ENCODE measurements at regions of chr6 and their contacts with region 1.

Region 1: DNA sequence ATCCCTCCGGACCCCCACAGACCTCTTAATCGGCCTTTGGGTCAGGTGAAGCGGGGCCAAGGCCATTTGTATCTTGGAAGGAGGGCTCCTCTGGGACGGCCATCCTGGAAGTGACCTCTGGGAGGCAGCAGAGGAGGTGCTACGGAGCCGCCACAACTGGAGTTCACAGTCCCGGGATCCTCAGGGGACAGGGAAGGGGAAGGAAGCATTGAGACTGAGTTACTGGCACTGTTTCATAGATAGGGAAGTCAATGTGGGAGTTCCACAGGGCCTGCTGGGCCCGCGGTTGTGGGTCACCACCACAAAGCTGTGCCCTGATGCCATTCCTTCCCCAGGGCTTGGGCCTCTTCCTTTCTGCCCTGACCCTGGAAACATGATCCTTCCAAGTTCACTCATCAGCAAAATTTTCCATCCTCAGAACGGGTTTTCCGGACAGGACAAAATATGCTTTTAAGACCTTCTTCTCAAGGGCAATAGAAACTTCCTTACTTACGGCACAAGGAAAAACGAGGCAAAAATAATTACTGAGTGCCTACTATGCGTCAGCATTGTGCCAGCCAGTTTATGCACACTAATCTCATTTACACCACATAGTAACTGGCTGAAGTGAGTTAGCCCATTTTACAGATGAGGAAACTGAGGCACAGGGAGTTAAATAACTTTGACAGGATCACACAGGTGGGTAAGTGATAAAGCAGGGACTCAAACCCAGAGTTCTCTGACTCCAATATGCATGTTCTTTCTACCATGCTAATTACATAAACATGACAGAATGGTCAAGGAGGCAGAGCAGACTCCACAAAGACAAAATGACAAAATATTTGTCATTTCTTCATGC is 143.8 kb downstream of the UNC5CL start:
- DNase-seq: peak; percentile 56 to 67
- ATAC-seq: peak; percentile 53 to 88 (median 83)
- H3K4me3 ChIP-seq: no peak overlapping the region
- H3K27ac ChIP-seq: peak overlapping the region in 6 of 10 donors; percentile 8 to 92 (median 44)
- H3K4me1 ChIP-seq: peaks cover 0 to 36% (median 18%) of the 10 kb centered on the region in 9 donors
- H3K27me3 ChIP-seq: no peaks in the 10 kb centered on the region
- CTCF ChIP-seq: peak; percentile 24 to 70 (median 58)

Region 2: DNA sequence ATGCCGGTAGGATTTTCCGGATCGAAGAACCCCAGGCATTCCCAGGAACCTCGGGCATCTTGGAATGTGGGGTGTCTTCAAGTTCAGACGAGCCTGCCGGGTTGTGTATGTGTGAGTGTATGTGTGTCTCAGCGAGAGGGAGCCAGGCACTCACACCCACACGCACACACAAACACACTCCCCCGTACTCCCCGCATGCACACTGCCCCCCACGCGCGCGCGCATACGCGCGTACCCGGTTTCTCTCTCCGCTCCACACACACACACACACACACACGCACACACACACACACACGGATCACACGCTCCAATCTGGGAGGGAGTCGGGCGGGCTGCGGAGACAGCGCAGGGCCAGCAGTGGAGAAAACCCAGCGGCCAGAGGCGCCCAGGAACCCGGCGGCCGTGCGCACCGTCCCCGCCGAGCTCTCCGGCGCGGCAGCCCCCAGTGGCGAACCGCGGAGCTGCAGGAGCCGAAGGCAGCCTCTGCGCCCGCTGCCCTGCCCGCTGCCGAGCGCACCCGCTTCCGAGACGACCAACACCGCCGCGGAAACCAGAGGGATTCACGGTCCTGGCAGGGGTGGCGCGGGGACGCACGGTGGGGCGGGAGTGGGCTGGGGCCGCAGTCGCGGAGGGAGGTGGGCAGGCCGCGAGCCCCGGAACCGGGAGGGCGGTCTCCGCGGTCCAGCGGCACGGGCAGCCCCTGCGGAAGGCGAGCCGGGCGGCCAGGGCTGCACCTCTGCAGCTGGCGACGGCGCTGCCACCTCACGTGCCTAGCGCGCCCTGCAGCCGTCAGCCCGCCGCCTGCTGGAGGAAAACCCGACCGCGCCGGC is 307.7 kb before region 1 on chr6 and contains the start of gene LRFN2:
- intact Hi-C with region 1: no loop called
- DNase-seq: peak; percentile 34 to 71
- ATAC-seq: peak; percentile 87 to 95 (median 90)
- H3K4me3 ChIP-seq: peak within 1 kb of the TSS in 9 of 10 donors; percentile 22 to 53 (median 43)
- H3K27ac ChIP-seq: peak within 1 kb of the TSS in 1 of 10 donors; percentile 15
- H3K4me1 ChIP-seq: peaks cover 0 to 20% (median 15%) of the 10 kb centered on the region in 9 donors
- H3K27me3 ChIP-seq: peaks cover 0 to 94% (median 83%) of the 10 kb centered on the region in 7 donors
- CTCF ChIP-seq: peak; percentile 19 to 71 (median 62)
- total RNA-seq, gene LRFN2: not detected

Region 3: GRCh38 chr6:41021832-41022231 is 126.7 kb after region 1 on chr6:
- intact Hi-C with region 1: loop called in 6 of 10 experiments (anchors 2 to 5 kb)
- DNase-seq: peak in 1 of 2 donors; percentile 25
- ATAC-seq: peak in 7 of 8 donors; percentile 56 to 90 (median 75)
- H3K4me3 ChIP-seq: no peak overlapping the region
- H3K27ac ChIP-seq: no peak overlapping the region
- H3K4me1 ChIP-seq: peaks cover 0 to 10% (median 0%) of the 10 kb centered on the region in 9 donors
- H3K27me3 ChIP-seq: no peaks in the 10 kb centered on the region
- CTCF ChIP-seq: peak in 6 of 9 donors; percentile 17 to 52 (median 40)

Region 4: DNA sequence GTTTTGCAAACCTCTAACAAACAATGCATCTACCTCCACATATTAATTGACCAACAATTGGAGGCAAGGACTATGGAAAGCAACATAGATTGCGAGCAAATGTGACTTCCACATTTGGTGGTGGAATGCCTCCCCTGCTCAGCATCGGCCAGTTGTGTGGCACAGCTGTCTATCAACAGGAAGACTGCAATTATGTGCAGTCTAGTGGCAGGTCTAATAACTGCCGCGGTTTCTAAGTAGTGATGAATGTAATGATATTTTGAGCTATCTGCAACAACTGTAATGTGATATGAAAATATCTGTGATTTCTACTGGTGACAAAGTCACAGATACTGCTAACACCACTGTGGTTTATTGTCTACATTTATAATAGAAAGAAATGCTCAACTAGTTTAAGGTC is 497.1 kb after region 1 on chr6:
- intact Hi-C with region 1: no loop called
- DNase-seq: no peak
- ATAC-seq: no peak
- H3K4me3 ChIP-seq: no peak overlapping the region
- H3K27ac ChIP-seq: no peak overlapping the region
- H3K4me1 ChIP-seq: peaks cover 0 to 4% (median 0%) of the 10 kb centered on the region in 9 donors
- H3K27me3 ChIP-seq: peaks cover under 1 to 22% (median 11%) of the 10 kb centered on the region in 7 donors
- CTCF ChIP-seq: no peak

Measured in heart right ventricle (tissue), 16 donors.